PC-9 (cell line): ENCODE measurements at regions of chr14 and their contacts with region 1.

Region 1: DNA sequence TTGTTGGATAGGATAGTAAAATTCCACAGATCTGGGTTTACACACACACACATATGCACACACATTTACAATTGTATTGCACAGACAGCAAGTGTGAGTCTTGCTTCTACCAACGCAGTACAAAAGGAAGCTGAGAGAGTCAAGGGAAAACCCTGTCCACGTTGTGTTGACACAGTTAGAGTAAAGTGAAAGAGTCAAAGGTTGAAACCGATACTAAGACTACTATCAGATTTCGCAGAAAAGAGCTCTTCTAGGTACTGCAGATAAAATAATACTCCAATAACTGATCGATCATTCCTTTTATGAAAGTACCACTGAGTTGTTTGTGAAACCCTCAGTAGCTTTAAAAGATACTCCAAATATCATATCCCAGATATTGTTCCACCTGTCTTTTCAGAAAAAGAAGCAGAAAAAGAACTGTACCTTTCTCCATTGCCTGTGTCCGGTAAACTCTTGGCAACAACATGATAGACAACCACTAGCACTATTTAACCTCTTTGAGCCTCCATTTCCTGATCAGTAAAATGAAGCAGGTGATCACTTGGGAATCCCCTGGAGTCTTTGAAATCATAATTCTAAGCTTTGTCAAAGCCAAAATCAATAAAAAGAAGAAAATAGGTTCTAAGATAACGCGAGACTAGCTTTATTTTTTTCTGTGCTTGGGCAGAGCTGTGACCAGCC is 224.6 kb upstream of the FOXN3 start:
- DNase-seq: no peak
- H3K4me3 ChIP-seq: no peak overlapping the region
- H3K27ac ChIP-seq: no peak overlapping the region
- H3K4me1 ChIP-seq: no peaks in the 10 kb centered on the region
- H3K27me3 ChIP-seq: peaks cover 15% of the 10 kb centered on the region
- CTCF ChIP-seq: no peak

Region 2: GRCh38 chr14:88137327-88137726 is 1504.3 kb before region 1 on chr14:
- CTCF ChIA-PET with region 1: interaction called, 10 read pairs
- POLR2A ChIA-PET with region 1: no interaction called
- intact Hi-C with region 1: no loop called
- DNase-seq: no peak
- H3K4me3 ChIP-seq: no peak overlapping the region
- H3K27ac ChIP-seq: no peak overlapping the region
- H3K4me1 ChIP-seq: no peaks in the 10 kb centered on the region
- H3K27me3 ChIP-seq: no peaks in the 10 kb centered on the region
- CTCF ChIP-seq: no peak

Region 3: GRCh38 chr14:89736867-89737266 is 95.2 kb after region 1 on chr14:
- CTCF ChIA-PET with region 1: no interaction called
- POLR2A ChIA-PET with region 1: no interaction called
- intact Hi-C with region 1: no loop called
- DNase-seq: no peak
- H3K4me3 ChIP-seq: no peak overlapping the region
- H3K27ac ChIP-seq: no peak overlapping the region
- H3K4me1 ChIP-seq: no peaks in the 10 kb centered on the region
- H3K27me3 ChIP-seq: peaks cover 3% of the 10 kb centered on the region
- CTCF ChIP-seq: no peak

Region 4: DNA sequence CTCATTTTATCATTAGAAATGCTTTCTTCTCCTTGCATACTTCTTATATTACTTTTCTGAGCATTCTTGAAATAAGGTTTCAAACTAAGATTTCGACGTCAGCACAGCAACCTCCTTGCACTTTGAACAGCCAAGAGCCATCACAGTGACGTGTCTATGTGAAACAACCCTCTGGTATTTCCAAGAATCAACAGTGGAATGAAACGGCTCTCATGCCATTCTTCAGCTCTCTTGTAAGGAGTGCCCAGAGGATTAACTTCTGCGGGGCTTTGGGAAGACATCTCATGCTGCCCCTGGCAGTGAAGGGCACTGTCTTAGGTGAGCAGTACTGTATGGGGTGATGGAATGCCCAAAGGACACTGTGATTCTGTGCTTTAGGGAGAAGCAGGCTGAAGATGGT is 203.8 kb after region 1 on chr14:
- CTCF ChIA-PET with region 1: no interaction called
- POLR2A ChIA-PET with region 1: no interaction called
- intact Hi-C with region 1: no loop called
- DNase-seq: no peak
- H3K4me3 ChIP-seq: no peak overlapping the region
- H3K27ac ChIP-seq: no peak overlapping the region
- H3K4me1 ChIP-seq: no peaks in the 10 kb centered on the region
- H3K27me3 ChIP-seq: no peaks in the 10 kb centered on the region
- CTCF ChIP-seq: no peak